Activated CD4-positive, alpha-beta T cell treated with anti-CD3 and anti-CD28 coated beads for 36 hours (primary cell): ENCODE measurements at regions of chr4 and their contacts with region 1.

Region 1: GRCh38 chr4:147799986-147800555 is 68.2 kb downstream of the ARHGAP10 start:
- DNase-seq: peak; percentile 80
- ATAC-seq: peak; percentile 97
- H3K4me3 Mint-ChIP-seq: no peak overlapping the region
- H3K27ac Mint-ChIP-seq: no peak overlapping the region
- H3K4me1 Mint-ChIP-seq: peaks cover 21% of the 10 kb centered on the region
- H3K27me3 Mint-ChIP-seq: no peaks in the 10 kb centered on the region

Region 2: GRCh38 chr4:147629783-147630730 is 170.0 kb before region 1 on chr4:
- CTCF ChIA-PET with region 1: no interaction called
- POLR2A ChIA-PET with region 1: no interaction called
- intact Hi-C with region 1: loop called in 1 of 2 experiments (anchors 5 kb)
- DNase-seq: no peak
- ATAC-seq: no peak
- H3K4me3 Mint-ChIP-seq: no peak overlapping the region
- H3K27ac Mint-ChIP-seq: no peak overlapping the region
- H3K4me1 Mint-ChIP-seq: no peaks in the 10 kb centered on the region
- H3K27me3 Mint-ChIP-seq: no peaks in the 10 kb centered on the region

Region 3: DNA sequence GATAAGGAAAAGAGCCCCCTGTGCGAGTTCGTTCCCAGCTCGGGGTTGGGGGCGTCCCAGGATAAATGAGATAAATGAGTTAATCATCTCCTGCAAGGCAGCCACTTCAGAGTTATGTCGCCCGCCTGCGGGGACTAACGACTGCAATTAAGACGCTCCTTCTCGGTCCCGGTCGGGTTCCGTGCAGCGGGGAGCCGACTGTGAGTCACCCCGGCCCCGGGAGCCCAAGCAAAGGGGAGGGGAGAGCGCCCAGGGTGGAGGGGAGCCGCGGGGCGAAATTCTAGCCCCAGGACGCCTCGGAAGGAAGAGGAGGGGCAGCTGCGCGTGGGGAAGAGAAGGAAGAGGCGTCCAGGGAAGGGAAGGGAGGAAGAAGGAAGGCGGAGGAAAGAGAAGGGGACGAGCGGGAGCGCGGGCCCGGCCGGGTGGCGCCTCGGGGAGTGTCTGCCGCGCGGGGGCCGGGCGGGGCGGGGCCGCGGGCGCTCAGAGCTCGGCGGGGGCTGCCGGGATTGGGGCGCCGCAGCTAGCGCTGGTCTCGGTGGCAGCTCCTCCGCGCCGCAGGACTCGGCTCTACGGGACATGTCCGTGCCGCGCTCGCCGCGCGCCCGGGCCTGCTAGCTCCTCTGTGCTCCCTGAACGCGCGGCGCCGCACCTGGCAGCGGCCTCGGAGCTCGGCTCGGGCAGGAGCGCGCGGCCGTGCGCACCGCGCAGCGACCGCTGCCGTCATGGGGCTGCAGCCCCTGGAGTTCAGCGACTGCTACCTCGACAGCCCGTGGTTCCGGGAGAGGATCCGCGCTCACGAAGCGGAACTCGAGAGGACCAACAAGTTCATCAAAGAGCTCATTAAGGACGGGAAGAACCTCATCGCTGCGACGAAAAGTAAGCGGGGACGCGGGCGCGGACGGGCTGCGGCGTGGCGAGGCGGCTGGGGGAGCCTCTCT is 68.2 kb before region 1 on chr4 and contains the start of gene ARHGAP10:
- CTCF ChIA-PET with region 1: no interaction called
- POLR2A ChIA-PET with region 1: no interaction called
- intact Hi-C with region 1: loop called (anchors 2 kb)
- DNase-seq: peak; percentile 83
- ATAC-seq: peak; percentile 82
- H3K4me3 Mint-ChIP-seq: peak within 1 kb of the TSS; percentile 85
- H3K27ac Mint-ChIP-seq: peak within 1 kb of the TSS; percentile 87
- H3K4me1 Mint-ChIP-seq: peaks cover 45% of the 10 kb centered on the region
- H3K27me3 Mint-ChIP-seq: peaks cover 3% of the 10 kb centered on the region
- total RNA-seq, gene ARHGAP10: 6.1 to 6.2 TPM

Region 4: DNA sequence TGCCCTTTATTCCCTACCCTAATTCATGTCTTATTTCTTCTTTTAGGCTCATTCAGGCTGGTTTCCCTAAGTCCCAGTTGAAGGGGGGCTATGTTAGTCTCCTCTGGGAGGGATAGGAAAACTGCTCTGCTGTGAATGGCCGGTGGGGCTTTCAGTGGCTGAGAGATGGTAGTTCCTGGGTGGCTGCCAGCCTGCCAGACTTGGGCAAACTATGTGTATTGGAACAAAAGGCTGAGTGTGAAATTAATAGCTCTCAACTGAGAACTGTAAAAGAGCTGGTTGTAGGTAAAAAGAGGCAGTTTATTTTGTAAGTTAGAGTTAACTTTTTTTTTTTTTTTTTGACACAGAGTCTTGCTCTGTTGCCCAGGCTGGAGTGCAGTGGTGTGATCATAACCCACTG is 39.4 kb before region 1 on chr4:
- CTCF ChIA-PET with region 1: no interaction called
- POLR2A ChIA-PET with region 1: no interaction called
- intact Hi-C with region 1: no loop called
- DNase-seq: no peak
- ATAC-seq: no peak
- H3K4me3 Mint-ChIP-seq: no peak overlapping the region
- H3K27ac Mint-ChIP-seq: no peak overlapping the region
- H3K4me1 Mint-ChIP-seq: peaks cover under 1% of the 10 kb centered on the region
- H3K27me3 Mint-ChIP-seq: no peaks in the 10 kb centered on the region

Region 5: DNA sequence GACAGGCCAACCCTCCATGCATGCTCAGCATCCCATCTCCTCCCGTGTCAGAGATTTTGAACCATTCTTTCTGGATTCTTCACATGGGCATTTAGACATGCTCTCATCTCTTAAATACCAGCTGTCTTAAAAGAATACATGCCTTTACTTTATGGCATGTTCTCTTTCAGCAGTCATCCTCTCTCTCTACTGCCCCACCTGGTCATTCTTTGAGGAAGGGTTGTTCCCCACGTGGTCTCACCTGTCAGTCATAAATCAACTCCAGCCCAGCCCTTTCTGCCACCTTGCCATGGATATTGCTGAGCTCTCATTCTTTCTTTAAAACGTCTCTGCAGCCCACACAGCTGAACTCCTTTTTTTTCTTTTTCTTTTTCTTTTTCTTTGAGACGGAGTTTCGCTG is 43.1 kb after region 1 on chr4:
- CTCF ChIA-PET with region 1: no interaction called
- POLR2A ChIA-PET with region 1: no interaction called
- intact Hi-C with region 1: loop called in 1 of 2 experiments (anchors 2 kb)
- DNase-seq: peak; percentile 29
- ATAC-seq: peak; percentile 74
- H3K4me3 Mint-ChIP-seq: no peak overlapping the region
- H3K27ac Mint-ChIP-seq: no peak overlapping the region
- H3K4me1 Mint-ChIP-seq: no peaks in the 10 kb centered on the region
- H3K27me3 Mint-ChIP-seq: no peaks in the 10 kb centered on the region

Region 6: GRCh38 chr4:148770377-148770776 is 970.3 kb after region 1 on chr4:
- CTCF ChIA-PET with region 1: no interaction called
- POLR2A ChIA-PET with region 1: no interaction called
- intact Hi-C with region 1: no loop called
- DNase-seq: no peak
- ATAC-seq: no peak
- H3K4me3 Mint-ChIP-seq: no peak overlapping the region
- H3K27ac Mint-ChIP-seq: no peak overlapping the region
- H3K4me1 Mint-ChIP-seq: no peaks in the 10 kb centered on the region
- H3K27me3 Mint-ChIP-seq: no peaks in the 10 kb centered on the region